Activated CD4-positive, alpha-beta memory T cell treated with anti-CD3 and anti-CD28 coated beads for 36 hours (primary cell): ENCODE measurements at regions of chrX and their contacts with region 1.

Region 1: GRCh38 chrX:107205770-107206696 is at the starts of genes DNAAF6 and NUP62CL:
- DNase-seq: peak; percentile 78
- H3K4me3 Mint-ChIP-seq: peak within 1 kb of the TSS; percentile 83
- H3K27ac Mint-ChIP-seq: no peak within 1 kb of the TSS
- H3K4me1 Mint-ChIP-seq: peaks cover 3% of the 10 kb centered on the region
- H3K27me3 Mint-ChIP-seq: no peaks in the 10 kb centered on the region
- total RNA-seq, gene DNAAF6: not detected
- total RNA-seq, gene NUP62CL: 2.5 to 2.8 TPM

Region 2: DNA sequence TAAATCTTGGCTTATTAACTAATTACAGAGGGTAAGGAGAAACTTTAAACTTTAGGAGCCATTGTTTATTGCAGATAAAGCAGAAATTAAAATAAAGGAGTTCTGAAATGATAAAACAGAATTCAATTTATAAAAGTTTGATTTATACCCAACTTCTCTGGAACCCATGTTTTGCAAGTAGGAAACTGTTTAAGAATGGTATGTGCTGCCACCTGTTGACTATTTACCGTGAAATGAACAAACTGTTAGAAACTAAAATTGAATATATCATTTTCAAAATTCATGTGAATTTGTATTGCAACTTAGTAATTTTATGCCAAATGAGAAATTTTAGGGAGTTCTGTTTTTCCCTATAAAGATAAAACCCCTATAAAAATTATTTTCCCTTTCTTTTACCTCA is 414.5 kb before region 1 on chrX:
- CTCF ChIA-PET with region 1: no interaction called
- POLR2A ChIA-PET with region 1: no interaction called
- intact Hi-C with region 1: no loop called
- DNase-seq: no peak
- H3K4me3 Mint-ChIP-seq: no peak overlapping the region
- H3K27ac Mint-ChIP-seq: no peak overlapping the region
- H3K4me1 Mint-ChIP-seq: no peaks in the 10 kb centered on the region
- H3K27me3 Mint-ChIP-seq: no peaks in the 10 kb centered on the region

Region 3: GRCh38 chrX:107118322-107119147 is 87.5 kb before region 1 on chrX and contains the start of gene RBM41:
- CTCF ChIA-PET with region 1: no interaction called
- POLR2A ChIA-PET with region 1: interaction called, 3 read pairs
- intact Hi-C with region 1: loop called (anchors 1 kb)
- DNase-seq: peak; percentile 81
- H3K4me3 Mint-ChIP-seq: peak within 1 kb of the TSS; percentile 96
- H3K27ac Mint-ChIP-seq: peak within 1 kb of the TSS; percentile 93
- H3K4me1 Mint-ChIP-seq: peaks cover 32% of the 10 kb centered on the region
- H3K27me3 Mint-ChIP-seq: no peaks in the 10 kb centered on the region
- total RNA-seq, gene RBM41: 9.5 to 11.4 TPM